Activated CD4-positive, alpha-beta T cell treated with anti-CD3 and anti-CD28 coated beads, Interleukin-2, amount 10 ng/mL, durations not matched to agents 24 days and 14 days (primary cell): ENCODE measurements at regions of chr5 and their contacts with region 1.

Region 1: DNA sequence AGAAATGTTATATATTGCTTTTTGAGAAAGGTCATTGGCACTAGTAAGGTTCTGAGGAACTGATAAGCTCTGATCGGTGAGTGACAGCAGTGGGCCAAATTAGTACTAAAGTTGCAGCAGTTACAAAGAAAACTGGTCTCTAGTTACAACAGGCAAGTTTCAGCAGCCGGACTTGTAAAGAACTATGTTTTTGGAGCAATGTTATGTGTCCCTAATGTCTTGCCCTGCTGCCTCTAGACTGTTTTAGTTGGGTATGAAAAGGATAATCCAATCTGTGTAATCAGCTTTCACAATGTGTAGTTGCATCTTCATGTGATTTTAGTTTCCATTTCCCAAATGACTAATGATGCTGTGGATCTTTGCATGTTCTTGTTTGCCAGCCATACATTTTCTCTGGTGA is 113.5 kb downstream of the CAMK4 start:
- DNase-seq: peak; percentile 59
- H3K4me3 Mint-ChIP-seq: no peak overlapping the region
- H3K27ac Mint-ChIP-seq: peak overlapping the region; percentile 80
- H3K4me1 Mint-ChIP-seq: peaks cover 24% of the 10 kb centered on the region
- H3K27me3 Mint-ChIP-seq: no peaks in the 10 kb centered on the region

Region 2: DNA sequence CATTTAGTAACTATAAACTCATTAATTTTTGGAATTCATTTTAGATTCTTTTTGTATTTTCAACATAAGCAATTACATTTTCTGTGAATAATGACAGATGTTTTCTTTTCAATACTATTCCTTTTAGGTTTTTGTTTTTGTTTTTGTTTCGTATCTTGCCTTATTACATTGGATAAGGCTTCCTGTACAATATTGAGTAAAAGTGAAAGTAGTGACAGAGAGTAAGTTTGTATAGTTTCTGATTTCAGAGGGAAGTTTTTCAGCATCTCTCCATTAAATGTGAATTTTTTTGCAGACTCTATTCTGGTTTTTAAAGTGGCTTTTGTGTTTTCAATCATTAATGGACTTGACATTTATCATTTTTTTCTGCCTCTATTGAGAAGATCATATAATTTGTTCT is 126.3 kb before region 1 on chr5:
- intact Hi-C with region 1: no loop called
- DNase-seq: no peak
- H3K4me3 Mint-ChIP-seq: peak overlapping the region; percentile 32
- H3K27ac Mint-ChIP-seq: no peak overlapping the region
- H3K4me1 Mint-ChIP-seq: peaks cover 27% of the 10 kb centered on the region
- H3K27me3 Mint-ChIP-seq: peaks cover 6% of the 10 kb centered on the region

Region 3: GRCh38 chr5:111237470-111237869 is 100.2 kb before region 1 on chr5:
- intact Hi-C with region 1: loop called (anchors 2 kb)
- DNase-seq: no peak
- H3K4me3 Mint-ChIP-seq: peak overlapping the region; percentile 73
- H3K27ac Mint-ChIP-seq: peak overlapping the region; percentile 92
- H3K4me1 Mint-ChIP-seq: peaks cover 68% of the 10 kb centered on the region
- H3K27me3 Mint-ChIP-seq: no peaks in the 10 kb centered on the region

Region 4: DNA sequence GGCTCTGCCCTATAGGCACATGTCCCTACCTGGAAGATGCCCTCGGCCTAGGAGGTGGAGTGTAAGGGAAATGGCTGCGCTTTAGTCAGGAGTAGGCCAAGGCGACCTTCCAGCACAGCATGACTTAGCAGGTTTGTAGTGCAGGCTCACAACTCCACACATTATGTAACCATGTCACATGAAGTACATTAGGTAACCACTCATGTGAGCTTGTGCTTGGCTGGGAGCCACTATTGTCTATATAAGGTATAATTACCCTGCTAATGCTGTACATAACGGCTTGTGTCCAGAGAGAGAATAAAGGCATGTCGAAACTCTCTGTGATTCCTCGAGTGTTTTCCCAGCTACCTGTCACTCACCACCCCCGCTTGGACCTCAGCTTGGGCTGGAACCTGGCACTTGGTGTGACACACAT is 38.6 kb before region 1 on chr5:
- intact Hi-C with region 1: loop called (anchors 5 kb)
- DNase-seq: no peak
- H3K4me3 Mint-ChIP-seq: no peak overlapping the region
- H3K27ac Mint-ChIP-seq: peak overlapping the region; percentile 34
- H3K4me1 Mint-ChIP-seq: peaks cover 6% of the 10 kb centered on the region
- H3K27me3 Mint-ChIP-seq: no peaks in the 10 kb centered on the region

Region 5: DNA sequence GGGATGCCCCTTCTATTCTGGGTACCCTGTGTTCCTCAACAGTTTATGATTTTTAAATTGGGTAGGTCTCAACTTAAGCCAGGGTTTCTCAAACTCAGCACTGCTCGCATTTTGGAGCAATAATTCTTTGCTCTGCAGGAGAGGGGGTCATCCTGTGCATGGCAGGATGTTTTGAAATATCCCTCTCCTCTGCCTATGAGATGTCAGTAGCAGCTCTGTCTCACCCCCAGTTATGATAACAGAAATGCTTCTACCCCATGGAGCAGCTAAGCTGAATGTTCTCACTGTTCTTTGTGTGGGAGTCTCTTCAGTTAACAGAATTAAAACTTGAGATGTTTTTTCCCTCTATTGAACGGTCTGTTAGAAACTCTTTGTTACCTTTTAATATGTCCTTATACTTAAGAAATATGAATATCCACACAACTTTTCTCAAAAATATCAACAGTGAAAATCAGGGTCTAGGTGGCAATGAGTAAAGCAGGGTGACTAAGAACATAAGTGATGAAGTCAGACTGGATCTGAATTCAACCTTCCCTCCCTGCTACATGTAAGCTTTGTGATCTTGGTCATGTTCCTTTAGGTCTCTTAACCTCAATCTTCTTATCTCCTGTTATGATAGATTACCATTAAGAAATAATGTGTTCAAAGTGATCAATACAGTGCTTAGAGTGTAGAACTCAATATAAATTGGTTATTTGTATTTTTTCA is 24.5 kb before region 1 on chr5:
- intact Hi-C with region 1: loop called (anchors 1 kb)
- DNase-seq: no peak
- H3K4me3 Mint-ChIP-seq: no peak overlapping the region
- H3K27ac Mint-ChIP-seq: peak overlapping the region; percentile 44
- H3K4me1 Mint-ChIP-seq: peaks cover 28% of the 10 kb centered on the region
- H3K27me3 Mint-ChIP-seq: no peaks in the 10 kb centered on the region

Region 6: GRCh38 chr5:111447822-111448221 is 110.1 kb after region 1 on chr5:
- intact Hi-C with region 1: no loop called
- DNase-seq: no peak
- H3K4me3 Mint-ChIP-seq: no peak overlapping the region
- H3K27ac Mint-ChIP-seq: no peak overlapping the region
- H3K4me1 Mint-ChIP-seq: peaks cover 3% of the 10 kb centered on the region
- H3K27me3 Mint-ChIP-seq: no peaks in the 10 kb centered on the region

Region 7: GRCh38 chr5:111735583-111736270 is 398.0 kb after region 1 on chr5:
- intact Hi-C with region 1: loop called (anchors 5 kb)
- DNase-seq: no peak
- H3K4me3 Mint-ChIP-seq: no peak overlapping the region
- H3K27ac Mint-ChIP-seq: peak overlapping the region; percentile 48
- H3K4me1 Mint-ChIP-seq: peaks cover 38% of the 10 kb centered on the region
- H3K27me3 Mint-ChIP-seq: no peaks in the 10 kb centered on the region